IMR-90 (cell line): ENCODE measurements at regions of chr15 and their contacts with region 1.

Region 1: DNA sequence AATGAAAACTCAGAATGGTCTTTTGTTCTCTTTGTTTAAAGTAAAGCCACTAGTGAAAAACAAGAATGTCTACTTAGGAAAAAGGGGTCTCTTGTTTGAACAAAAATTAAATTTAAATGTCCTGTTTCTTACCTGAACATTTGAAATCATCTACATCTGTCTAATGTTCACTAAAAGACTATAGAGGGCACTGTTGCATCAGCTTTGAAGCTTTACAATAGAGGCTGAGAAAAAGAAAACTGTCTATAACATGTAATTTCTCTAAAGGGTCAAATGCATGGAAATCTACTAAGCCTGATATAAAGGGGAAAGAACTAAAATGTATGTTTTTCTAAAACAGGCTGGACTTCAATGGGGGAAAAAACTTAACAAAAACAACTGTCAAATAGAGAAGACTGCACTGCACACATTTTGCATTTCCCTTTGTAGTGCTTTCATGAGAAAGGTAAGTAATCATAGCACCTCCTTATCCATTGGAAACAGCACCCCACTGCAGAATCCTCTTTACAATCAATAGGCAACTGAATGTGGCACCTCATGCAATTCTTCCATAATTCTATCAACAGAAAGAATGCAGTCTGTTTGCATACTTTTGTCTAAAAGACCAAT is 26.3 kb downstream of the DPH6 start:
- DNase-seq: peak; percentile 64
- ATAC-seq: peak; percentile 78
- H3K4me3 ChIP-seq: no peak overlapping the region
- H3K27ac ChIP-seq: no peak overlapping the region
- H3K4me1 ChIP-seq: peaks cover 6% of the 10 kb centered on the region; the same call in 1 of the 2 replicates
- H3K27me3 ChIP-seq: no peaks in the 10 kb centered on the region
- CTCF ChIP-seq: peak; percentile 79
- POLR2A ChIP-seq: no peak
- RAD21 ChIP-seq: peak; percentile 91

Region 2: DNA sequence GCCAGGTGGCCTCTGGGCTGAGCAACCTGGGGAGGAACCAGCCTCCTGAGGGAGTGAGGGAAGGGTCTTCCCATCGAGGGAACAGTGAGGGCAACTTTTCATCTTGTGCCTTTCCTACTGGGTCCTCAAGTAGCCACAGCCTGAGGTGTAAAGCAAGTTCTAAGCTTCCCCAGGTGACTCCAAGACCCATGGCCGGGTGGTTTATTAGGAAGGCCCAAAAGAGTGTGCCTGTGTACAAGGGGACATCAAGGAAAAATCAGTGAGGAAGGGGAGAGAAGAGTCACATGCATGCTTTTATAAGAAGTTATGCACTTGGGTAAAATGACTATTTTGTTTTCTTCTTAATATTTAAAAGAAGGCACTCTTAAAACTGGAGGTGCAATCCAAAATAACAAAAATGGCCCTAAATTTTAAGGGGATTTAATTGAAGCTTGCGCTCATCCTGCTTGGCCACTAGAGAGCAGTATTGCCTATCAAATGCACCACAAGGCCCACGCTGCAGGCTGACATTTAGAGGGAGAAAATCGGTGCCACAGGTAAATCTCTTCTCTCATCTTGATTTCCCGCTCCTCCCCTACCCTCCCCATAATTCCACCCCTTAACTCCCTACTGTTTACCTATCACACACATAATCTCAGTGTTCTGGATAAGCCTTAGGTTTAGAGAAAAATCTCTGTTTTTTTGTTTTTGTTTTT is 441.3 kb before region 1 on chr15:
- CTCF ChIA-PET with region 1: interaction called, 4 read pairs
- POLR2A ChIA-PET with region 1: no interaction called
- dilution Hi-C with region 1: no loop called
- in situ Hi-C with region 1: no loop called
- intact Hi-C with region 1: loop called (anchors 5 kb)
- DNase-seq: peak; percentile 72
- ATAC-seq: peak; percentile 80
- H3K4me3 ChIP-seq: no peak overlapping the region
- H3K27ac ChIP-seq: no peak overlapping the region
- H3K4me1 ChIP-seq: peaks cover 5% of the 10 kb centered on the region; the same call in 1 of the 2 replicates
- H3K27me3 ChIP-seq: no peaks in the 10 kb centered on the region
- CTCF ChIP-seq: peak; percentile 95
- POLR2A ChIP-seq: 0 out of 2 replicates have a peak, but pooled peaks have one; percentile 47
- RAD21 ChIP-seq: peak; percentile 97

Region 3: DNA sequence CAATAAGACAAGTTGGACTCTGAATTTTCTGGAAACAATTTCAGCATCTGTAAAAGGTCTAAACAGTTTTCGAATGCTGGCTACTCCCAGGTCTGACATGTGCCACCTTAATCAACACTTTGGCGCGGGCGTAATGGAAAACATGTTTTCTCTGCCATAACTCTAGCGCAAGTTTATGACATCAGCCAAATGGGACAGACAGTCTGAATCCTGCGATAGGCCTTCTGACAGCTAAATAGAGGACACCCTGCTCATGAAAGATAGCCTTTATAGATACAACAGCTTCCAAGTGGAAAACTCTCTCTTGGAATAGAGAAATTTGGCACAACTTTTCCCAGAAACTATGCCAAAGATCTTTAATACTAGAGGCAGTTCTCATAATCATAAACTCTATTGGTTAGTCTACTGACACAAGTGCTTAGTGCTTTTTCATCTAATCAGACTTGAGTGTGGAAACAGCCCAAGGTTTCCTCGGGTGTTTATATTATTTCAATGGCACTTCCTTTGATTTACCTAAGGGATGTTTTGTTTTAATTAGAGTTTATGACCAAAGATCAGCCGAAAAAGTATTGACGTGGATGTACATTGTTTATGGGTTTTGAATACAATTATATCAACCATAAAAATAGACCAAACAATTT is 146.4 kb after region 1 on chr15:
- CTCF ChIA-PET with region 1: no interaction called
- POLR2A ChIA-PET with region 1: no interaction called
- dilution Hi-C with region 1: no loop called
- in situ Hi-C with region 1: no loop called
- intact Hi-C with region 1: no loop called
- DNase-seq: no peak
- ATAC-seq: no peak
- H3K4me3 ChIP-seq: no peak overlapping the region
- H3K27ac ChIP-seq: no peak overlapping the region
- H3K4me1 ChIP-seq: peaks cover 2% of the 10 kb centered on the region; the same call in 1 of the 2 replicates
- H3K27me3 ChIP-seq: no peaks in the 10 kb centered on the region; the same call in 1 of the 2 replicates
- CTCF ChIP-seq: no peak
- POLR2A ChIP-seq: no peak
- RAD21 ChIP-seq: no peak

Region 4: GRCh38 chr15:35751413-35752133 is 231.9 kb after region 1 on chr15:
- CTCF ChIA-PET with region 1: interaction called, 6 read pairs
- POLR2A ChIA-PET with region 1: interaction called, 3 read pairs
- dilution Hi-C with region 1: no loop called
- in situ Hi-C with region 1: no loop called
- intact Hi-C with region 1: loop called (anchors 1 kb)
- DNase-seq: peak; percentile 78
- ATAC-seq: peak; percentile 91
- H3K4me3 ChIP-seq: no peak overlapping the region
- H3K27ac ChIP-seq: no peak overlapping the region
- H3K4me1 ChIP-seq: peaks cover 2% of the 10 kb centered on the region; the same call in 1 of the 2 replicates
- H3K27me3 ChIP-seq: no peaks in the 10 kb centered on the region
- CTCF ChIP-seq: peak; percentile 71
- POLR2A ChIP-seq: no peak
- RAD21 ChIP-seq: peak; percentile 79

Region 5: DNA sequence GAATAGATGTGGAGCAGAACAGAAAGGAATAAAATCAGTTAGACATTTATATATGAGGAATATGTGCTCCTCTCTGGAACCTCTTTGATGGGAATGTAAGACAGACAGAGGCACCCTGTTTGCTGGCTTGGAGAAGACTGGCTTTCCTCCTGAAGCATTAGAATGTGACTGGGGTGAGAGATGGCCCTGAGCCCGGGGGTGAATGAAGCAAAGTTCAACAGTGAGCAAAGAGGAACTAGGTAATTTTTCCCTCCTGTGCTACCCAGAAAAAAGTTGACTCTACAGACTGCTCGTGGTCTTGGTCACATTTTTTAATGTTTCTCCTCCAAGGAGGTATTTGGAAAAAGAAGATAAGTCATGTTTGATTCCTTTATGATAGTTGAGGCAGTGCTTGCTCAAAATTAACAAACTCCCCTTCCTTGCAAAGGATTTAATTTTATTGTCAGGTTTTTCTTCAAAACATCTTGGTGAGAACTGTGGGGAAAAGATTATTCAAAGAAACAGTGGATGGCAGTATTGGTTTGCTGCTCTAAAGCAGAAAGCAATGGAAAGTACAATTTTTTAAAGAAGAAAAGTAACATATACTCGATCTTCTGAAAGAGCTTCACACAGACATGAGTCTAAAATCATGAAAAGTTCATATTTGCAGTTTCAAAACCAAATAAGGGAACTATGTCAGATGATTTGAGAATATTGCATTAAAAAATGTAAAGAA is 689.4 kb after region 1 on chr15:
- CTCF ChIA-PET with region 1: no interaction called
- POLR2A ChIA-PET with region 1: no interaction called
- dilution Hi-C with region 1: no loop called
- in situ Hi-C with region 1: no loop called
- intact Hi-C with region 1: loop called (anchors 10 kb)
- DNase-seq: peak; percentile 37
- ATAC-seq: no peak
- H3K4me3 ChIP-seq: no peak overlapping the region
- H3K27ac ChIP-seq: no peak overlapping the region
- H3K4me1 ChIP-seq: 0 out of 2 replicates have a peak, but pooled peaks cover 2% of the 10 kb centered on the region
- H3K27me3 ChIP-seq: no peaks in the 10 kb centered on the region
- CTCF ChIP-seq: peak; percentile 54
- POLR2A ChIP-seq: no peak
- RAD21 ChIP-seq: peak; percentile 62

Region 6: GRCh38 chr15:36479200-36479896 is 959.7 kb after region 1 on chr15:
- CTCF ChIA-PET with region 1: no interaction called
- POLR2A ChIA-PET with region 1: no interaction called
- dilution Hi-C with region 1: no loop called
- in situ Hi-C with region 1: no loop called
- intact Hi-C with region 1: loop called (anchors 10 kb)
- DNase-seq: peak; percentile 65
- ATAC-seq: peak; percentile 48; the same call in 1 of the 2 replicates
- H3K4me3 ChIP-seq: no peak overlapping the region
- H3K27ac ChIP-seq: peak overlapping the region; percentile 82
- H3K4me1 ChIP-seq: peaks cover 5% of the 10 kb centered on the region; the same call in 1 of the 2 replicates
- H3K27me3 ChIP-seq: no peaks in the 10 kb centered on the region
- CTCF ChIP-seq: no peak
- POLR2A ChIP-seq: no peak
- RAD21 ChIP-seq: no peak

Region 7: GRCh38 chr15:36591536-36592411 is 1072.1 kb after region 1 on chr15:
- CTCF ChIA-PET with region 1: no interaction called
- POLR2A ChIA-PET with region 1: no interaction called
- dilution Hi-C with region 1: no loop called
- in situ Hi-C with region 1: no loop called
- intact Hi-C with region 1: loop called (anchors 10 kb)
- DNase-seq: no peak
- ATAC-seq: peak; percentile 13; the same call in 1 of the 2 replicates
- H3K4me3 ChIP-seq: no peak overlapping the region
- H3K27ac ChIP-seq: no peak overlapping the region
- H3K4me1 ChIP-seq: peaks cover 10% of the 10 kb centered on the region
- H3K27me3 ChIP-seq: no peaks in the 10 kb centered on the region
- CTCF ChIP-seq: no peak
- POLR2A ChIP-seq: no peak
- RAD21 ChIP-seq: no peak

Region 8: GRCh38 chr15:37100109-37100965 is 1580.7 kb after region 1 on chr15 and contains the start of gene MEIS2:
- CTCF ChIA-PET with region 1: no interaction called
- POLR2A ChIA-PET with region 1: no interaction called
- dilution Hi-C with region 1: no loop called
- in situ Hi-C with region 1: no loop called
- intact Hi-C with region 1: loop called (anchors 10 kb)
- DNase-seq: peak; percentile 96
- ATAC-seq: peak; percentile 52
- H3K4me3 ChIP-seq: peak within 1 kb of the TSS; percentile 94
- H3K27ac ChIP-seq: peak within 1 kb of the TSS; percentile 99
- H3K4me1 ChIP-seq: peaks cover 3% of the 10 kb centered on the region
- H3K27me3 ChIP-seq: no peaks in the 10 kb centered on the region
- CTCF ChIP-seq: no peak
- POLR2A ChIP-seq: peak; percentile 77
- RAD21 ChIP-seq: no peak
- total RNA-seq, gene MEIS2: 50.3 and 71.3 TPM in 2 replicates